Naive thymus-derived CD4-positive, alpha-beta T cell (primary cell): ENCODE measurements at regions of chrX and their contacts with region 1.

Region 1: GRCh38 chrX:70433848-70434351 is 10.7 kb upstream of the DLG3 start:
- DNase-seq: peak; percentile 49 to 77 (median 73)
- ATAC-seq: peak; percentile 95
- H3K4me3 ChIP-seq: peak overlapping the region; percentile 79
- H3K4me3 Mint-ChIP-seq: peak overlapping the region; percentile 84 to 94 (median 90)
- H3K27ac ChIP-seq: peak overlapping the region; percentile 41
- H3K27ac Mint-ChIP-seq: peak overlapping the region; percentile 71 to 94 (median 89)
- H3K4me1 ChIP-seq: peaks cover 0 to 3% of the 10 kb centered on the region in 2 donors
- H3K4me1 Mint-ChIP-seq: peaks cover 0 to 24% (median 9%) of the 10 kb centered on the region in 7 donors
- H3K27me3 ChIP-seq: no peaks in the 10 kb centered on the region
- H3K27me3 Mint-ChIP-seq: peaks cover 0 to 18% (median 8%) of the 10 kb centered on the region in 5 donors

Region 2: DNA sequence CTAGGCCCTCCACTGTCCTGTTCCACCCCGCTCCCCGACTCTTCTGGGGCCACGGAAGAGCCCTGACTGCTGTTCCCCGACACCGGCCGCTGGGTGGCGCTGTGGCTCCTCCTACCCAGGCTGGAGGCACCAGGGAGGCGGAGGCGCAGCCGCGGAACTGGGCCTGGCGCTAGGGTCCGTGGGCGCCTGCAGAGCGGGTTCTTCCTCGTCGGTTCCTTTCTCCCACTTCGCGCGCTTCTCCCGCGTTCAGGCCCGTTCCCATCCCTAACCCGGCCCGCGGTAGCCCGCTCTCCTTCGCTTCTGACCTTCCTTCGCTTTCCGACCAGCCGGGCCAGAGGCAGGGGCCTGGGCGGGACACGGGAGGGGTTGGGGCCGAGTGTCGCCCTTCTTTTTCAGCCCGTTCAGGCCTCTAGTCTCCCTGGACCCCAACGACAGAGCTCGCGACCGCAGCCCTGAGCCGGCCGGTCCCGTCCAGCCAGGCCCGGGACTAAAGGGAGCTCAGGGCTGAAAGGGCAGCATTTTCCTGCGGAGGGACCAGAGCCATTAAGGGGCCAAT is 895.5 kb before region 1 on chrX:
- CTCF ChIA-PET with region 1: no interaction called
- POLR2A ChIA-PET with region 1: no interaction called
- intact Hi-C with region 1: loop called in 1 of 2 experiments (anchors 1 kb)
- DNase-seq: peak; percentile 30 to 79 (median 58)
- ATAC-seq: peak; percentile 90
- H3K4me3 ChIP-seq: no peak overlapping the region
- H3K4me3 Mint-ChIP-seq: peak overlapping the region in 8 of 10 donors; percentile 14 to 77 (median 61)
- H3K27ac ChIP-seq: no peak overlapping the region
- H3K27ac Mint-ChIP-seq: peak overlapping the region in 1 of 9 donors; percentile 34
- H3K4me1 ChIP-seq: peaks cover 3 to 10% of the 10 kb centered on the region in 2 donors
- H3K4me1 Mint-ChIP-seq: peaks cover 4 to 17% (median 11%) of the 10 kb centered on the region in 7 donors
- H3K27me3 ChIP-seq: no peaks in the 10 kb centered on the region
- H3K27me3 Mint-ChIP-seq: peaks cover 0 to 9% (median 6%) of the 10 kb centered on the region in 5 donors

Region 3: DNA sequence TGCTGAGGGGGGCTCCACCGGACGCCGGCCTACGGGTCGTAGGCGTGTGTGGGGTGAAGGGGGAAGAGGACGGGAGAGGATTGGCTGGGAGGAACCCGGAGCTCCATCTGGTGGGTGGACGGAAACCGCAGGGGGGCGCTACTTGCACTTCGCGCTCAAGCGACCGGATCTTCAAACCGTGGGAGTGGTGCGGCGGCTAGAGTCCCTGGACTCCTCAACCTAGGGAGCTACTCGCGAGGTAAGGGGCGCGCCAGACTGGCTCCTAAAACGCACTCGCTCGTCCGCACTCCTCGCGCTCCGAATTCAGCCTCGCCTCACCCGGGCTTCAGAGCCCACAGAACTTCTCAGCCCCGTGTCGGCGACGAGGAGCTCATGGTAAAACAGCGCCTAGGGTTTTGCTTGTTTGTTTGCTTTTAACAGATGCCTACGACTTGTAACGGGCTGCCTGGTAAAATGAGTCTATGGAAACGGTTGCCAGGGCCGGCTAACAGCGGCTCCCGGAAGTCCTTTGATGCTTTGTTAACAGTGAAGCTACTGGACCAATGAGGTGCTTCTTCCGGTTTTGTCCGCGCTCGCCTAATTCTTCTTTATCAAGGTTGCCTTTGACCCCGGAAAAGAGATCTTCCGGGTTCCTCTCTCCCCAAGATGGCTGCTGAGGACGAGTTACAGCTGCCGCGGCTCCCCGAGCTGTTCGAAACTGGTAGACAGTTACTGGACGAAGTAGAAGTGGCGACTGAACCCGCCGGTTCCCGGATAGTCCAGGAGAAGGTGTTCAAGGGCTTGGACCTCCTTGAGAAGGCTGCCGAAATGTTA is 300.4 kb before region 1 on chrX and contains the start of gene IGBP1:
- CTCF ChIA-PET with region 1: no interaction called
- POLR2A ChIA-PET with region 1: interaction called, 8 read pairs
- intact Hi-C with region 1: loop called (anchors 1 kb)
- DNase-seq: peak; percentile 40 to 90 (median 82)
- ATAC-seq: peak; percentile 90
- H3K4me3 ChIP-seq: peak within 1 kb of the TSS; percentile 94
- H3K4me3 Mint-ChIP-seq: peak within 1 kb of the TSS; percentile 95 to 99 (median 99)
- H3K27ac ChIP-seq: peak within 1 kb of the TSS; percentile 82
- H3K27ac Mint-ChIP-seq: peak within 1 kb of the TSS; percentile 91 to 99 (median 97)
- H3K4me1 ChIP-seq: peaks cover 16 to 18% of the 10 kb centered on the region in 2 donors
- H3K4me1 Mint-ChIP-seq: peaks cover 14 to 47% (median 29%) of the 10 kb centered on the region in 7 donors
- H3K27me3 ChIP-seq: no peaks in the 10 kb centered on the region
- H3K27me3 Mint-ChIP-seq: no peaks in the 10 kb centered on the region
- total RNA-seq, gene IGBP1: 46.7 to 70.1 (median 58.9) TPM

Region 4: DNA sequence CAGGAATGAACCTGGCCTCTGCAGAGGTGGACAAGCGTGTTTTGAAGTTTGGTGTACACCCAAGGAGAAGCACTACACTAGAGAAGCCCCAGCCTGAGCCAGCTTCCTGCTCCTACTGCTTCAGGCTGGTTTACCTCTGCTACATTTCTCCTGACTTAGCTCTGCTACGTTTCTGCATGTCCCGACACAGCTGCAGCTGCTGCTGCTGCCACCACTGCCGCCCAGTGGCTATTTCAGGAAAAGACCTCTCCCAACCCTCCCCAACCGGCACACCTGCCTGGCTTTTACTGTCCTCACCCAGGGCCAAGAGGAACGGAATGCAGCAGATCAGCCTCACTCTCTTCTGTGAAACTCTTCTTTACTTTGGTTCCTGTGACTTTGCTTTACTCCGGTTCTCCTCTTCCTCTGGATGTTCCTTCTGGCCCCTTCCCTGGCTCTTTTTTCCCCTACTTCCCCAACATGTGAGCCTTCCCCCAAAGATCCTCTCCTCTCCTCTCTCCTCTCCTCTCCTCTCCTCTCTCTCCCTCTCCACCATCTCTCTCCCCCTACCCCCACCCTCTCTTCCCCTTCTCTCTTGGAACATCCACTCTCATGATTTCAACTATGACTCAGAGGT is 170.8 kb before region 1 on chrX:
- CTCF ChIA-PET with region 1: no interaction called
- POLR2A ChIA-PET with region 1: no interaction called
- intact Hi-C with region 1: loop called in 1 of 2 experiments (anchors 5 kb)
- DNase-seq: peak in 5 of 9 donors; percentile 2 to 23 (median 4)
- ATAC-seq: no peak
- H3K4me3 ChIP-seq: no peak overlapping the region
- H3K4me3 Mint-ChIP-seq: no peak overlapping the region
- H3K27ac ChIP-seq: no peak overlapping the region
- H3K27ac Mint-ChIP-seq: no peak overlapping the region
- H3K4me1 ChIP-seq: no peaks in the 10 kb centered on the region
- H3K4me1 Mint-ChIP-seq: peaks cover 0 to 2% (median 0%) of the 10 kb centered on the region in 7 donors
- H3K27me3 ChIP-seq: no peaks in the 10 kb centered on the region
- H3K27me3 Mint-ChIP-seq: no peaks in the 10 kb centered on the region

Region 5: GRCh38 chrX:70301716-70302115 is 132.2 kb before region 1 on chrX:
- CTCF ChIA-PET with region 1: no interaction called
- POLR2A ChIA-PET with region 1: no interaction called
- intact Hi-C with region 1: no loop called
- DNase-seq: no peak
- ATAC-seq: no peak
- H3K4me3 ChIP-seq: no peak overlapping the region
- H3K4me3 Mint-ChIP-seq: no peak overlapping the region
- H3K27ac ChIP-seq: no peak overlapping the region
- H3K27ac Mint-ChIP-seq: peak overlapping the region in 1 of 9 donors; percentile 49
- H3K4me1 ChIP-seq: peaks cover 0 to 4% of the 10 kb centered on the region in 2 donors
- H3K4me1 Mint-ChIP-seq: peaks cover 0 to 21% (median 0%) of the 10 kb centered on the region in 7 donors
- H3K27me3 ChIP-seq: no peaks in the 10 kb centered on the region
- H3K27me3 Mint-ChIP-seq: no peaks in the 10 kb centered on the region

Region 6: DNA sequence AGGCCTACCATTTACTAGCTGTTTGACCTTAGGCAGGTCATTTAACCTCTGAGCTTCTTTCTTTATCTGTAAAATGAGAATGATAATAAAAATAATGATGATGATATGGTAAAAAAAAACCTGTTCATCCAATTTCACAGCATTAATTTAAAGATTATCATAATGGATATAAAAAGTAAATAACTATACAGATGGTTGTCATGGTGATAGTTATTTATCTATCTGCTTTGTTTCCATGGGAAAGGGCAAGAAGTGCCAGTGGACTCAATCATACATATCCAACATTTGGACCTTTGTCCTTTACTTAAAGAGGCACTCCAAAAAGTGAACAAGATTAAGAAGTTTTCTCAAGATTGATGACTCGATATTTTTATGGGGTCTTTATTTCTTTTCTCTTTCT is 105.0 kb before region 1 on chrX:
- CTCF ChIA-PET with region 1: no interaction called
- POLR2A ChIA-PET with region 1: no interaction called
- intact Hi-C with region 1: loop called in 1 of 2 experiments (anchors 1 kb)
- DNase-seq: no peak
- ATAC-seq: no peak
- H3K4me3 ChIP-seq: no peak overlapping the region
- H3K4me3 Mint-ChIP-seq: no peak overlapping the region
- H3K27ac ChIP-seq: no peak overlapping the region
- H3K27ac Mint-ChIP-seq: no peak overlapping the region
- H3K4me1 ChIP-seq: no peaks in the 10 kb centered on the region
- H3K4me1 Mint-ChIP-seq: peaks cover 0 to 4% (median 0%) of the 10 kb centered on the region in 7 donors
- H3K27me3 ChIP-seq: no peaks in the 10 kb centered on the region
- H3K27me3 Mint-ChIP-seq: no peaks in the 10 kb centered on the region

Region 7: GRCh38 chrX:70444326-70444945 is 10.5 kb after region 1 on chrX and contains the start of gene DLG3:
- CTCF ChIA-PET with region 1: interaction called, 3 read pairs
- POLR2A ChIA-PET with region 1: interaction called, 4 read pairs
- intact Hi-C with region 1: loop called in 1 of 2 experiments (anchors 1 kb)
- DNase-seq: no peak
- ATAC-seq: peak; percentile 45
- H3K4me3 ChIP-seq: no peak within 1 kb of the TSS
- H3K4me3 Mint-ChIP-seq: peak within 1 kb of the TSS; percentile 51 to 74 (median 65)
- H3K27ac ChIP-seq: no peak within 1 kb of the TSS
- H3K27ac Mint-ChIP-seq: no peak within 1 kb of the TSS
- H3K4me1 ChIP-seq: no peaks in the 10 kb centered on the region
- H3K4me1 Mint-ChIP-seq: peaks cover 0 to 6% (median 0%) of the 10 kb centered on the region in 7 donors
- H3K27me3 ChIP-seq: no peaks in the 10 kb centered on the region
- H3K27me3 Mint-ChIP-seq: peaks cover 27 to 64% (median 34%) of the 10 kb centered on the region in 5 donors
- total RNA-seq, gene DLG3: 4.1 to 24.5 (median 5.5) TPM

Region 8: DNA sequence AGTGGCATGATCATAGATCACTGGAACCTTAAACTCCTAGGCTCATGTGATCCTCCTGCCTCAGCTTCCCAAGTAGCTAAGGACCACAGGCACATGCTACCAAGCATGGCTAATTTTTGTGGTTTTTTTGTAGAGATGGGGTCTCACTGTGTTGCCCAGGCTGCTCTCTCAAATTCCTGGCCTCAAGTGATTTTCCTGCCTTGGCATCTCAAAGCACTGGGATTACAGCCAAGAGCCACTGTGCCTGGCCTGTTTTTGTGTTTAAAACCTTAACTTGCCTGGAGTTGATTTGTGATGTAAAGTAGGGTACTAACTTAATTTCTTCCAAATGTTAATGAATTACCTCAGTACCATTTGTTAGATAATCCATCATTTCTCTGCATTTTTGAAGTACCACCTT is 33.1 kb after region 1 on chrX:
- CTCF ChIA-PET with region 1: no interaction called
- POLR2A ChIA-PET with region 1: no interaction called
- intact Hi-C with region 1: no loop called
- DNase-seq: no peak
- ATAC-seq: no peak
- H3K4me3 ChIP-seq: no peak overlapping the region
- H3K4me3 Mint-ChIP-seq: no peak overlapping the region
- H3K27ac ChIP-seq: no peak overlapping the region
- H3K27ac Mint-ChIP-seq: no peak overlapping the region
- H3K4me1 ChIP-seq: no peaks in the 10 kb centered on the region
- H3K4me1 Mint-ChIP-seq: peaks cover 0 to 14% (median 13%) of the 10 kb centered on the region in 7 donors
- H3K27me3 ChIP-seq: no peaks in the 10 kb centered on the region
- H3K27me3 Mint-ChIP-seq: no peaks in the 10 kb centered on the region

Region 9: DNA sequence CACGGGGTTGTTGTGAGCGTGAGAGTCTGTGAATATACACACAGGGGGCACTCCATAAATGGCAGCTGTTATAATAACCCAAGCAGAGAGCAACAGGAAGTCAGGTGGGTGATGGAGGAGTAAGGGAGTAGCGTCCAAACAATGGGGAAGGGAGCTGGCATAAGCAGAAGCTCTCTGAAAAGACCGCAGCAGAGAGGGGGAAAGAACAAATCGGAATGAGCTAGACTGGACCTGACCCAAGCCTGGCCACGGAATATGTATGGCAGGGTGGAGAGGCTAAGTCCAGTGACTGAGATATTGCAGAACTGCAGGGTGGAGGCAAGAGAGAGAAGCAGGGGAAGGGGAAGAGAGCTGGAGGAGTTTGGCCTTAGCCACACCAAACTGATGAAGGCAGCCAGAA is 782.6 kb after region 1 on chrX:
- CTCF ChIA-PET with region 1: no interaction called
- POLR2A ChIA-PET with region 1: no interaction called
- intact Hi-C with region 1: no loop called
- DNase-seq: no peak
- ATAC-seq: no peak
- H3K4me3 ChIP-seq: no peak overlapping the region
- H3K4me3 Mint-ChIP-seq: peak overlapping the region in 1 of 10 donors; percentile 46
- H3K27ac ChIP-seq: no peak overlapping the region
- H3K27ac Mint-ChIP-seq: peak overlapping the region in 2 of 9 donors; percentile 40 to 51
- H3K4me1 ChIP-seq: no peaks in the 10 kb centered on the region
- H3K4me1 Mint-ChIP-seq: peaks cover 0 to 6% (median 3%) of the 10 kb centered on the region in 7 donors
- H3K27me3 ChIP-seq: no peaks in the 10 kb centered on the region
- H3K27me3 Mint-ChIP-seq: peaks cover 0 to 3% (median 0%) of the 10 kb centered on the region in 5 donors